K562 (cell line): ENCODE measurements at regions of chr6 and their contacts with region 1.

Region 1: GRCh38 chr6:20564269-20564668 is 30.0 kb downstream of the CDKAL1 start:
- DNase-seq: peak in 2 of 4 experiments; percentile 25 to 27
- ATAC-seq: no peak
- H3K4me3 ChIP-seq: no peak overlapping the region
- H3K27ac ChIP-seq: no peak overlapping the region
- H3K4me1 ChIP-seq: no peaks in the 10 kb centered on the region
- H3K27me3 ChIP-seq: no peaks in the 10 kb centered on the region
- CTCF ChIP-seq: peak in 1 of 3 experiments; percentile 72; a peak in 2 of 6 replicates
- EP300 ChIP-seq: no peak
- POLR2A ChIP-seq: no peak
- RAD21 ChIP-seq: peak; percentile 74 to 78

Region 2: GRCh38 chr6:20352346-20352745 is 211.9 kb before region 1 on chr6:
- CTCF ChIA-PET with region 1: no interaction called
- POLR2A ChIA-PET with region 1: no interaction called
- in situ Hi-C with region 1: no loop called
- intact Hi-C with region 1: no loop called
- DNase-seq: peak in 3 of 4 experiments; percentile 28 to 72 (median 47)
- ATAC-seq: peak; percentile 69
- H3K4me3 ChIP-seq: no peak overlapping the region
- H3K27ac ChIP-seq: peak overlapping the region; percentile 46; the same call in 2 of the 3 replicates
- H3K4me1 ChIP-seq: peaks cover 0 to 12% of the 10 kb centered on the region in 2 experiments; a peak in 2 of 5 replicates
- H3K27me3 ChIP-seq: no peaks in the 10 kb centered on the region
- CTCF ChIP-seq: no peak
- EP300 ChIP-seq: peak; percentile 22; the same call in 1 of the 2 replicates
- POLR2A ChIP-seq: no peak
- RAD21 ChIP-seq: no peak

Region 3: GRCh38 chr6:20680697-20681165 is 116.5 kb after region 1 on chr6:
- CTCF ChIA-PET with region 1: no interaction called
- POLR2A ChIA-PET with region 1: no interaction called
- in situ Hi-C with region 1: no loop called
- intact Hi-C with region 1: no loop called
- DNase-seq: no peak
- ATAC-seq: no peak
- H3K4me3 ChIP-seq: no peak overlapping the region
- H3K27ac ChIP-seq: no peak overlapping the region
- H3K4me1 ChIP-seq: no peaks in the 10 kb centered on the region; a peak in 1 of 5 replicates
- H3K27me3 ChIP-seq: no peaks in the 10 kb centered on the region
- CTCF ChIP-seq: no peak
- EP300 ChIP-seq: no peak
- POLR2A ChIP-seq: no peak
- RAD21 ChIP-seq: no peak

Region 4: DNA sequence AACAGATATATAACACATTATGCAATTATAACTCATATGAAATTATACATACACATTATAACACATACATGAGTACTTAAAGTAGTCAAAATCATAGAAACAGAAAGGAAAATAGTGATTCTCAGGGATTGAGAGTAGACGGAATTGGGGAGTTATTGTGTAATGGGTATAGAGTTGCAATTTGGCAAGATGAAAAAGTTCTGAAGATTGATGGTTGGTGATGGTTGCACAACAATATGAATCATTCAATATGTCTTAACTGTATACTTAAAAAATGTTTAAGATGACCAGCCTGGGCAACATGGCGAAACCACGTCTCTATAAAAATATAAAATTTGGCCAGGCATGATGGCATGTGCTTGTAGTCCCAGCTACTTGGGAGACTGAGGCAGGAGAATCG is 342.7 kb after region 1 on chr6:
- CTCF ChIA-PET with region 1: no interaction called
- POLR2A ChIA-PET with region 1: no interaction called
- in situ Hi-C with region 1: no loop called
- intact Hi-C with region 1: loop called (anchors 1 kb)
- DNase-seq: no peak
- ATAC-seq: no peak
- H3K4me3 ChIP-seq: no peak overlapping the region
- H3K27ac ChIP-seq: no peak overlapping the region
- H3K4me1 ChIP-seq: no peaks in the 10 kb centered on the region
- H3K27me3 ChIP-seq: no peaks in the 10 kb centered on the region
- CTCF ChIP-seq: no peak
- EP300 ChIP-seq: no peak
- POLR2A ChIP-seq: no peak
- RAD21 ChIP-seq: no peak

Region 5: DNA sequence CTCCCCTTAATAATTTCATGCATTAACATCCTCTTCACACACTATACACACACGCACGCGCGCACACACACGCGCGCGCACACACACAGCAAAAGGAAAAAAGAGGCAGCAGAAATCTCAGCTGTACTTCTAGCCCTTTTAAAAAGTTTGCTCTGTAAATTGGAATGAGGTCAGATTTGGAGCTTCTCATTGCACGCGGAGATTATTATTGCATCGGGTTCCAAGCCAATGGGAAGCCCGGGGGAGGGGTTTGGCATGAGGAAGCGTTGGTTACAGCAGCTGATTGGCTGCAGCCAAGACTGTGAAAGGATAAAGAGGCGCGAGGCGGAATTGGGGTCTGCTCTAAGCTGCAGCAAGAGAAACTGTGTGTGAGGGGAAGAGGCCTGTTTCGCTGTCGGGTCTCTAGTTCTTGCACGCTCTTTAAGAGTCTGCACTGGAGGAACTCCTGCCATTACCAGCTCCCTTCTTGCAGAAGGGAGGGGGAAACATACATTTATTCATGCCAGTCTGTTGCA is 1029.2 kb after region 1 on chr6 and contains the start of gene SOX4:
- CTCF ChIA-PET with region 1: interaction called, 23 read pairs
- POLR2A ChIA-PET with region 1: no interaction called
- in situ Hi-C with region 1: no loop called
- intact Hi-C with region 1: loop called (anchors 2 kb)
- DNase-seq: peak; percentile 17 to 45 (median 34)
- ATAC-seq: peak; percentile 36; the same call in 2 of the 3 replicates
- H3K4me3 ChIP-seq: peak within 1 kb of the TSS; percentile 18
- H3K27ac ChIP-seq: no peak within 1 kb of the TSS
- H3K4me1 ChIP-seq: peaks cover 0 to 32% of the 10 kb centered on the region in 2 experiments; a peak in 2 of 5 replicates
- H3K27me3 ChIP-seq: peaks cover 8 to 21% of the 10 kb centered on the region in 2 experiments; a peak in 3 of 5 replicates
- CTCF ChIP-seq: no peak
- EP300 ChIP-seq: no peak
- POLR2A ChIP-seq: no peak
- RAD21 ChIP-seq: no peak
- polyA plus RNA-seq, gene SOX4: 0.07 to 0.21 TPM

Region 6: DNA sequence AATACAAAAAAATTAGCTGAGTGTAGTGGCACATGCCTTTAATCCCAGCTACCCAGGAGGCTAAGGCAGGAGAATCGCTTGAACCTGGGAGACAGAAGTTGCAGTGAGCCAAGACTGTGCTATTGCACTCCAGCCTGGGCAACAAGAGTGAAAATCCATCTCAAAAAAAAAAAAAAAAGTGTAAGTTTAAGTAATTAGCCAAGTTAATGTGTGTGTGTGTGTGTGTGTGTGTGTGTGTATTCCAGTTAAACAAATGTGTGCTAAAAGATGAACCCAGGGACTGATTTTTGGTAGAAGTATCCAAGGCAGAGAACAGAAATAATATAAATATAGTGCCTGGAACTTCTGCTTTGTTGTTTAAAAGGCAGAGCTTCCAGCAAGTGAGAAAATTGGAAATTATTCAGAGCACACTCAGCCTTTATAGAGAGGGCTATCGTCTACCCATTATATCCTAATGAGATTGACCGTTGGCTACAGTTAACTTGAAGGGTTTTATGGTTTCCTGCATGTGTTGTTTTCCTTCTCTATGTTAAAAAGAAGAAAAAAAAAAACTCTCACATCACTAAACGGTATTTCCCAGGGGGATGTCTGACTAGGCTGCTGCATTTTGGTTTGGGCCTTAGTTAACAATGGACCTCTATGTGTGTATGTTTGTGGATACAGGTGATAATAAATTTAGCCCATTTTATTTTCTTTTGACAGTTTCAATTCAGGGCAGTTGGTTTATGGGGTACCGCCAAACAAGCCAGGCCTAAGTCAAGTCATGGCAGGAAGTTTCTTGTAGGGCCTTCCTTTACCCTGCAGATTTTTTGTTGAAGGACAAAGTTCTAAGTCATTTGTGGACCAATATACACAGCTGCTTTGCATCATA is 1039.0 kb after region 1 on chr6:
- CTCF ChIA-PET with region 1: no interaction called
- POLR2A ChIA-PET with region 1: no interaction called
- in situ Hi-C with region 1: loop called (anchors 5 kb)
- intact Hi-C with region 1: no loop called
- DNase-seq: no peak
- ATAC-seq: no peak
- H3K4me3 ChIP-seq: no peak overlapping the region
- H3K27ac ChIP-seq: no peak overlapping the region
- H3K4me1 ChIP-seq: 0 out of 5 replicates have a peak, but pooled peaks cover 0 to 3% of the 10 kb centered on the region in 2 experiments
- H3K27me3 ChIP-seq: peaks cover 18 to 19% of the 10 kb centered on the region in 2 experiments; a peak in 4 of 5 replicates
- CTCF ChIP-seq: no peak
- EP300 ChIP-seq: no peak
- POLR2A ChIP-seq: no peak
- RAD21 ChIP-seq: no peak

Region 7: DNA sequence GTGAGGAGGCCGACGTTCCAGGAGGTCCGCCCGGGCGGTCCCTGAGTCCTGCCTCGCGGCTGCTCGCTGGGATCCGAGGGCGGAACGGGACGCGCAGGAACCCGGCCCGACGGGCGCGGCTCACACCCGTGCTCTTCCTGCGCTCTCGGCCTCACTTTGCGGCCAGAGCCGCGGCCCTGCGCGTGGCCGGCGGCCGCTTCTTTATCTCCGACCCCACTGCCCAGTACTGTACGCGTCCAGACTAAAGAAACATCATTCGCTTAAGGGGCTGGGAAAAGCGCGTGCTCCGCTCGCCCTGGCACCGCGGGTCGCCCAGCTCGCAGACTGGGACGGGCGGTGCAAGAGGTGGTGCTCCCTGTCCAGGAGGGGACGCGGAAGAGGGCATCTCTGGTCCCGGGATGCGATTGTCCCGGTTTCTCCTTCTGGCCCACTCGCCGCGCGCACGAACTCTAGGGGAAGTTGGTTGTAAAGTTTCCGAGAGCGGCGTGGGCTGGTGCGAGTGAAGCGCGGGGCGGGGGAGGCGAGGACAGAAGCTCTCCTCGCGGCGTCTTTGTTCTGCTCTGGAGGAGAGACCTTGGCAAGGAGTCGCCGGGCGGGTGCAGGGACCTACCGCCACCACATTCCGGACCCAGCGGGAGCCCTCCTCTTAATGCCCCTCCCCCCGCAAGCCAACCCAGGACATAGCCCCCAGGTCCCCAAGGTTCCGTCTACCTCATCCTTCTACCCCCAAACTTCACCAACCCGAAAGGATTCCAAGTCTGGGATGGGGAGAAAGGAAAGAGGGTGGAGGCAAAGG is 1100.2 kb after region 1 on chr6:
- CTCF ChIA-PET with region 1: no interaction called
- POLR2A ChIA-PET with region 1: no interaction called
- in situ Hi-C with region 1: no loop called
- intact Hi-C with region 1: no loop called
- DNase-seq: no peak
- ATAC-seq: no peak
- H3K4me3 ChIP-seq: no peak overlapping the region
- H3K27ac ChIP-seq: no peak overlapping the region
- H3K4me1 ChIP-seq: peaks cover 0 to 7% of the 10 kb centered on the region in 2 experiments; a peak in 1 of 5 replicates
- H3K27me3 ChIP-seq: peaks cover 34 to 44% of the 10 kb centered on the region in 2 experiments
- CTCF ChIP-seq: no peak
- EP300 ChIP-seq: no peak
- POLR2A ChIP-seq: no peak
- RAD21 ChIP-seq: no peak